Head of caudate nucleus (tissue), 42 donors: ENCODE measurements at regions of chr14 and their contacts with region 1.

Region 1: DNA sequence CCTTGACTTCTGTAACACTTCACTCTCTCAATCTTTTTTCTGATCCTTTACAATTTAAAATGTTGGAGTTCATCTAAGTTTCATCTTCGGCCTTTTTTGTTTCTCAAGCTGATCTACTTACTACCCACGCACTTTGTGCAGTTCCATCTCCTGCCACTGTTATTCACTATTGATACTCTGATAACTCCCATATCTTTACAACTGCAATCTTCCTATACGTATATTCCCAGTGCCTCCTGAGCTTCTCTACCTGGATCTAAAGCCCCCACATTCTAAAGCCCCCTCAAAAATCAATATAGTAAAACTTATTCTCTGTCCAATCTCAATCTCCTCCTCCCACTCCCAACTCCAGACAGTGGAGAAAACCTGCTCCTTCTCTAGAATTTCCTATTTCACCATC is 5.9 kb downstream of the ATG2B start:
- DNase-seq: no peak

Region 2: DNA sequence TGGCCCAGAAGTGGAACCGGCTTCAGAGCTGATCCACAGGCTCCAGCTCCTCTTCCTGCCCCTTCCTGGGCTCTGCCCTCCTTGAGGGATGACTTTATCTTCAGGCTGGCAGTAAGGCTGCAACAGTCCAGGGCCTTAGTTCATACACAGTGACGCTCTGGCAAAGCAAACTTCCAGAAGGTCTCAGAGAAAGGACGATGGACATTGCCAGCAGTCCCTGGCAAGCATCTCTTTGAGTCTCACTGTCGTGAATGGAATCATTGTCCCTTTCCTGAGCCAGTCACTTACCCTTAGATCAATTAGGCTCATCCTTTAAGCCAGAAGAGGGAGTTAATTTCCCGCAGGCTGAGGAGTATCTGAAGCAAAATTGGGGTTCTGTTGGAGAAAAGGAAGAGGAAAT is 43.3 kb after region 1 on chr14:
- intact Hi-C with region 1: loop called (anchors 5 kb)
- DNase-seq: peak in 38 of 42 donors; percentile 31 to 86 (median 67)